ENCODE measurements at regions of chr2 and their contacts with region 1.

Region 1: GRCh38 chr2:202588647-202589581 is 45.9 kb upstream of the FAM117B start:
- DNase-seq: peak; percentile 77
- H3K4me3 Mint-ChIP-seq: no peak overlapping the region
- H3K27ac Mint-ChIP-seq: peak overlapping the region; percentile 54
- H3K4me1 Mint-ChIP-seq: peaks cover 10% of the 10 kb centered on the region
- H3K27me3 Mint-ChIP-seq: no peaks in the 10 kb centered on the region

Region 2: GRCh38 chr2:202602285-202602684 is 13.4 kb after region 1 on chr2:
- CTCF ChIA-PET with region 1: interaction called, 10 read pairs
- POLR2A ChIA-PET with region 1: no interaction called
- DNase-seq: no peak
- H3K4me3 Mint-ChIP-seq: no peak overlapping the region
- H3K27ac Mint-ChIP-seq: no peak overlapping the region
- H3K4me1 Mint-ChIP-seq: peaks cover 2% of the 10 kb centered on the region
- H3K27me3 Mint-ChIP-seq: no peaks in the 10 kb centered on the region

Region 3: DNA sequence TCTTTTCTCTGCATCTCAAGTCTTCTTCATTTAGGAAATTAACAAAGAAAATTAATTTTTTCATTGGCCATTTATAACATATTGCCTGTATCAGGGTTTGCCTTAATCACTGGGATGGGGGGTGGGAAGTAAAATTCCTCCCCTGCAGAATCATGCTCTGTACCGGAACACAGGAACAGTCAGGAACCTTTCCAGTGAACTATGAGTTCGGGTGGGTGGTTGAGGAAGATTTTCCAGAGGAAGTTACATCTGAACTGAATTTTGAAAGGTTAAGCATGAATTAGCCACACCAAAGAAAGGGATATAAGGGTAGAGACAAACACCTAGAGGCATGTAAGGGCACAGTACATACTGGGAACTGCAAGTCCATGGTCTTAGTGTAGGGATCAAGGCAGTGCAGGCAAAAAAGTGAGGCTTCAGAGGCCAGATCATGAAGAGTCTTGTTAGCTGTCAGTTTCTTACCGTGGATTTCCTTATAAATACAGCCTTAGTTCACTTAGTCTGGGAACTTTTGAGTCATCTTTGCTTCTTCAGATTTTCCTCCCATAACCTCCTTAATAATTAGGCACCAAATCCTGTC is 101.5 kb after region 1 on chr2:
- CTCF ChIA-PET with region 1: no interaction called
- POLR2A ChIA-PET with region 1: no interaction called
- DNase-seq: no peak
- H3K4me3 Mint-ChIP-seq: no peak overlapping the region
- H3K27ac Mint-ChIP-seq: no peak overlapping the region
- H3K4me1 Mint-ChIP-seq: peaks cover 22% of the 10 kb centered on the region
- H3K27me3 Mint-ChIP-seq: no peaks in the 10 kb centered on the region